Heart left ventricle (tissue), 16 donors: ENCODE measurements at regions of chr12 and their contacts with region 1.

Region 1: GRCh38 chr12:124917135-124917840 is 2.8 kb upstream of the UBC start:
- DNase-seq: peak; percentile 97 to 99 (median 98)
- ATAC-seq: peak; percentile 90 to 94 (median 93)
- H3K4me3 ChIP-seq: peak overlapping the region in 11 of 12 donors; percentile 22 to 97 (median 80)
- H3K27ac ChIP-seq: peak overlapping the region; percentile 99 to 100 (median 100)
- H3K4me1 ChIP-seq: peaks cover 0 to 72% (median 51%) of the 10 kb centered on the region in 12 donors
- H3K27me3 ChIP-seq: no peaks in the 10 kb centered on the region
- CTCF ChIP-seq: no peak
- POLR2A ChIP-seq: peak in 1 of 2 donors; percentile 67

Region 2: GRCh38 chr12:124940549-124941527 is 23.6 kb after region 1 on chr12:
- intact Hi-C with region 1: loop called in 3 of 10 experiments (anchors 1 to 2 kb)
- DNase-seq: peak; percentile 90 to 94 (median 94)
- ATAC-seq: peak; percentile 60 to 86 (median 77)
- H3K4me3 ChIP-seq: peak overlapping the region in 11 of 12 donors; percentile 2 to 69 (median 57)
- H3K27ac ChIP-seq: peak overlapping the region; percentile 62 to 96 (median 88)
- H3K4me1 ChIP-seq: peaks cover 0 to 39% (median 25%) of the 10 kb centered on the region in 12 donors
- H3K27me3 ChIP-seq: no peaks in the 10 kb centered on the region
- CTCF ChIP-seq: peak; percentile 83 to 97 (median 92)
- POLR2A ChIP-seq: peak in 1 of 2 donors; percentile 37